Activated T-helper 1 cell treated with anti-CD3 and anti-CD28 coated beads, Interleukin-12 subunit alpha, Interleukin-12 subunit beta, Interleukin-2, Interleukin-4 antibody, amounts not matched to agents 30 ng/mL and 10 ng/mL and 1 ng/mL, durations not matched to agents 14 hours and 24 hours and 36 hours (primary cell): ENCODE measurements at regions of chr2 and their contacts with region 1.

Region 1: GRCh38 chr2:191617575-191617974 is 60.4 kb upstream of the NABP1 start:
- DNase-seq: peak; percentile 64
- H3K4me3 Mint-ChIP-seq: peak overlapping the region; percentile 20
- H3K27ac Mint-ChIP-seq: peak overlapping the region; percentile 90
- H3K4me1 Mint-ChIP-seq: peaks cover 53% of the 10 kb centered on the region
- H3K27me3 Mint-ChIP-seq: no peaks in the 10 kb centered on the region

Region 2: GRCh38 chr2:191521608-191522208 is 95.9 kb before region 1 on chr2:
- intact Hi-C with region 1: no loop called
- DNase-seq: no peak
- H3K4me3 Mint-ChIP-seq: no peak overlapping the region
- H3K27ac Mint-ChIP-seq: no peak overlapping the region
- H3K4me1 Mint-ChIP-seq: no peaks in the 10 kb centered on the region
- H3K27me3 Mint-ChIP-seq: peaks cover 5% of the 10 kb centered on the region

Region 3: DNA sequence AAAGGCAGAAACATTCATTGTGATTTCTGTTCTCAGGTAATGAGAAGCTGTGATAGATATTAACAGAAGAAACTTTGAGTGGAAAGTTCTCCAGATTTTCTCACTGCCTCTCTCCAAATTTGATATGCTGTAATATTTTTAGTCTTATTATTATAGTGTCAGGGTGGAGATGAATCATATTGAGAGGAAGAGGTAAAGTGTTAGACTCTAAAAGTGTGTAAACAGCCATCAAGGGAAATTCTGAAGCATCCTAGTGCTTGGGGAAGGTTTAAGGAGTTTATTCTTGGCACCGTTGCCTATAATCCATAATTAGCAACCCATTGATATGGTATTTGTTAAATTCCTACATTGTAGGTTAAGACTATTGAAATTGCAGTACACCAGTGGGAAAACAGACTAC is 44.4 kb before region 1 on chr2:
- intact Hi-C with region 1: loop called (anchors 1 kb)
- DNase-seq: no peak
- H3K4me3 Mint-ChIP-seq: peak overlapping the region; percentile 23
- H3K27ac Mint-ChIP-seq: peak overlapping the region; percentile 15
- H3K4me1 Mint-ChIP-seq: peaks cover 52% of the 10 kb centered on the region
- H3K27me3 Mint-ChIP-seq: peaks cover 24% of the 10 kb centered on the region

Region 4: DNA sequence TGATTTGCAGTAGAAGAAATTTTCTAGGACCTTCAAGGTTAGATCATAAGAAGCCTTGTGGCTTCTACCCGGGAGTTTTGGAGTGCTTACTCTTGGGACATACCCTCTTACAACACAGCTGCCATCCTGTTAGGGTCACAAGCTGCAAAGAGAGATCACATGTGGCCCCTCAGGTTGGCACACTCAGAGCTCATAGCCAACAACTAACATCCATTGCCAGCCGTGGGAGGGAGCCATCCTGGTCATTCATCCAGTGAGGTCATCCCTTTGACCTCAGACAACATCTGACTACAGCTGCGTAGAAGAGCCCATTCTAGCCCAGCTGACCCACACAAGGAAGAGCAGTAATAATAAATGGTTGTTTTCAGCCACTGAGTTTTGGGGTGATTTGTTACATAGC is 16.5 kb before region 1 on chr2:
- intact Hi-C with region 1: no loop called
- DNase-seq: no peak
- H3K4me3 Mint-ChIP-seq: no peak overlapping the region
- H3K27ac Mint-ChIP-seq: no peak overlapping the region
- H3K4me1 Mint-ChIP-seq: no peaks in the 10 kb centered on the region
- H3K27me3 Mint-ChIP-seq: peaks cover 10% of the 10 kb centered on the region

Region 5: GRCh38 chr2:191637182-191638078 is 19.9 kb after region 1 on chr2:
- intact Hi-C with region 1: loop called (anchors 1 kb)
- DNase-seq: no peak
- H3K4me3 Mint-ChIP-seq: peak overlapping the region; percentile 75
- H3K27ac Mint-ChIP-seq: peak overlapping the region; percentile 84
- H3K4me1 Mint-ChIP-seq: peaks cover 56% of the 10 kb centered on the region
- H3K27me3 Mint-ChIP-seq: peaks cover 1% of the 10 kb centered on the region

Region 6: DNA sequence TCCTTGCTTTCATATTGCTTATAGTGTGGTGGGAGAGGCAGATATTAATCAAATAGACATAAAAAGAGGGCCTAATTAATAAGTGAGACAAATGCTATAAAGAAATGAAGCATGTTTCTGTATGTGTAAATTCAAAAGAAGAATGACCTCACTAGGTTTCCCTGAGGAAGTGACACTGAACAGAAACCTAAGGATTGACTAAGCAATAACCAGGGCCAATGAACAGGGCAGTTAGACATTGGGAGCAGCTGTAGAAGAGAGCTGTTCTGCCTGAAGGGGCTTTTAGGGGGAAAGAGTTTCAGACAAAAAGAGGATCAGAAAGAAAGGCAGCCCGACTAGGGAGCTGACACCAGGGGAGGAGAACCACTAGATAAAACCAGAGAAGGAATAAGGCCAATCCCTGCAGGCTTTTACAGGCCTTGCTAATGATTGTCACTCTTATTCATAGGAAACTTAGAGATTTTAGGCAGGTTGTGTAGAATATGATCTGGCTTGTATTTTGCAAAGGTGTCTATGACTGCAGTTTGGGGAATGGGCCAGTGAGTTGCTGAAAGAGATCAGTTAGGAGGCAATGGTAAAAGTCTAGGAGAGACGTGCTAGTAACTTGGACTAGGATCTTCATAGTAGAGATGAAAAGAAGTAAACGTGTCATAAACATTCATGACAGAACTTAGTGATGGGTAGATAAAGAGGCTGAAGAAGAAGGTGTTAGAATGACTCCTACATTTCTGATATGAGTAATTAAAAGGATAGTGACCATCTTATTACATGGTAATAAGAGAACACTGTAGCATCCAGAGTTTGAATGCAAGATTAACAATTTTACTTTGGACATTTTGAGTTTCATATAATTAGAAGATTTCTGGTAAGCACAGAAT is 33.6 kb after region 1 on chr2:
- intact Hi-C with region 1: loop called (anchors 5 kb)
- DNase-seq: no peak
- H3K4me3 Mint-ChIP-seq: no peak overlapping the region
- H3K27ac Mint-ChIP-seq: peak overlapping the region; percentile 11
- H3K4me1 Mint-ChIP-seq: peaks cover 11% of the 10 kb centered on the region
- H3K27me3 Mint-ChIP-seq: no peaks in the 10 kb centered on the region

Region 7: DNA sequence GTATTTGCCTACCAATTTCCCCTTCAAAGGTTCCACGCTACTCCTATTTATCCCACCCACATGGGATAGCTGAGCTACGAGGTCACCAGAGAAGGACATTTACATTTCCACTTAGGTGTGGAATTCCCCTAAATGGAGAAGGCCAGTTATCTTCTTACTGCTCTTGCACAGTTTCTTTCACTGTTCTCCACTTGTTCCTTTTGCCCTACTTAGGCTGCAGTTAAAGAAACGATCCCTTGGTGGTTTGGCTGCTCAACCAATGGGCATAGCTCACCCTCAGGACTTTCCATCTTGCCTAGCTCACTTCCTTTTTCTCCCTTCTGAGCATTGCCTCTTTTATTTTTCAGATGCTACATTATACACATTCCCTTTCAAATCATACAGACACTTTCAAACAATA is 49.2 kb after region 1 on chr2:
- intact Hi-C with region 1: loop called (anchors 1 kb)
- DNase-seq: no peak
- H3K4me3 Mint-ChIP-seq: no peak overlapping the region
- H3K27ac Mint-ChIP-seq: peak overlapping the region; percentile 51
- H3K4me1 Mint-ChIP-seq: peaks cover 26% of the 10 kb centered on the region
- H3K27me3 Mint-ChIP-seq: no peaks in the 10 kb centered on the region

Region 8: DNA sequence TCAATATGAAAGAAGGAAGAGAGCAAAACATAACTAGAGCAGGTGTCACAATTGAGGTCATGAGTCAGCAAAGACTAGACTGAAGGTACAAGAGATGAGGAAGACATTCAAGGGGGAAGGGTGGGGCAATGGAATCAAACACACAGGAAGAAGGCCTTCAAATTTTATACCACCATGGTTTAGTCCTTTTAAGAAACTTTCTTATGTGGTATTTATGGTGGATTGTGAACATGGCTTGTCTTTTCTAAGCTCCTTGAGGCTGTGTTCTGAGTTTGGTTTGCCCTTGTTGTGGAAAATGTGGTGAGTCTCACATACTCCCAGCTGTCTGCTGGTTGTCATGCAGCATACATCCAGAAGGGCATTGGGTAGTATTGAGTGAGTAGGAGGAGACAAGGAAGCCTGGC is 122.4 kb after region 1 on chr2:
- intact Hi-C with region 1: loop called (anchors 2 kb)
- DNase-seq: peak; percentile 64
- H3K4me3 Mint-ChIP-seq: peak overlapping the region; percentile 2
- H3K27ac Mint-ChIP-seq: peak overlapping the region; percentile 45
- H3K4me1 Mint-ChIP-seq: peaks cover 18% of the 10 kb centered on the region
- H3K27me3 Mint-ChIP-seq: peaks cover 25% of the 10 kb centered on the region